CD4-positive, alpha-beta T cell (primary cell): ENCODE measurements at regions of chr11 and their contacts with region 1.

Region 1: GRCh38 chr11:1896923-1897322 is 5.2 kb upstream of the PRR33 start:
- DNase-seq: no peak
- ATAC-seq: no peak
- H3K4me3 ChIP-seq: no peak overlapping the region
- H3K4me3 Mint-ChIP-seq: no peak overlapping the region
- H3K27ac ChIP-seq: no peak overlapping the region
- H3K27ac Mint-ChIP-seq: no peak overlapping the region
- H3K4me1 ChIP-seq: peaks cover 7% of the 10 kb centered on the region
- H3K4me1 Mint-ChIP-seq: peaks cover 11% of the 10 kb centered on the region
- H3K27me3 ChIP-seq: peaks cover 0 to 3% of the 10 kb centered on the region in 2 experiments
- H3K27me3 Mint-ChIP-seq: peaks cover 7% of the 10 kb centered on the region
- CTCF ChIP-seq: no peak

Region 2: GRCh38 chr11:1852877-1853276 is 44.0 kb before region 1 on chr11 and contains the start of gene LSP1:
- CTCF ChIA-PET with region 1: no interaction called
- POLR2A ChIA-PET with region 1: no interaction called
- intact Hi-C with region 1: no loop called
- DNase-seq: peak; percentile 68 to 93 (median 82)
- ATAC-seq: peak; percentile 69
- H3K4me3 ChIP-seq: peak within 1 kb of the TSS; percentile 94
- H3K4me3 Mint-ChIP-seq: peak within 1 kb of the TSS; percentile 98
- H3K27ac ChIP-seq: peak within 1 kb of the TSS; percentile 88 to 91
- H3K27ac Mint-ChIP-seq: peak within 1 kb of the TSS; percentile 91
- H3K4me1 ChIP-seq: peaks cover 93% of the 10 kb centered on the region
- H3K4me1 Mint-ChIP-seq: peaks cover 51% of the 10 kb centered on the region
- H3K27me3 ChIP-seq: no peaks in the 10 kb centered on the region
- H3K27me3 Mint-ChIP-seq: no peaks in the 10 kb centered on the region
- CTCF ChIP-seq: no peak
- total RNA-seq, gene LSP1: 228 to 232 TPM

Region 3: GRCh38 chr11:1939006-1939625 is 42.2 kb after region 1 on chr11:
- CTCF ChIA-PET with region 1: no interaction called
- POLR2A ChIA-PET with region 1: no interaction called
- intact Hi-C with region 1: loop called (anchors 1 kb)
- DNase-seq: peak in 1 of 14 experiments; percentile 1
- ATAC-seq: no peak
- H3K4me3 ChIP-seq: no peak overlapping the region
- H3K4me3 Mint-ChIP-seq: no peak overlapping the region
- H3K27ac ChIP-seq: no peak overlapping the region
- H3K27ac Mint-ChIP-seq: no peak overlapping the region
- H3K4me1 ChIP-seq: peaks cover 3% of the 10 kb centered on the region
- H3K4me1 Mint-ChIP-seq: no peaks in the 10 kb centered on the region
- H3K27me3 ChIP-seq: no peaks in the 10 kb centered on the region
- H3K27me3 Mint-ChIP-seq: peaks cover 4% of the 10 kb centered on the region
- CTCF ChIP-seq: no peak